Dorsolateral prefrontal cortex (tissue), 120 donors: ENCODE measurements at regions of chr9 and their contacts with region 1.

Region 1: DNA sequence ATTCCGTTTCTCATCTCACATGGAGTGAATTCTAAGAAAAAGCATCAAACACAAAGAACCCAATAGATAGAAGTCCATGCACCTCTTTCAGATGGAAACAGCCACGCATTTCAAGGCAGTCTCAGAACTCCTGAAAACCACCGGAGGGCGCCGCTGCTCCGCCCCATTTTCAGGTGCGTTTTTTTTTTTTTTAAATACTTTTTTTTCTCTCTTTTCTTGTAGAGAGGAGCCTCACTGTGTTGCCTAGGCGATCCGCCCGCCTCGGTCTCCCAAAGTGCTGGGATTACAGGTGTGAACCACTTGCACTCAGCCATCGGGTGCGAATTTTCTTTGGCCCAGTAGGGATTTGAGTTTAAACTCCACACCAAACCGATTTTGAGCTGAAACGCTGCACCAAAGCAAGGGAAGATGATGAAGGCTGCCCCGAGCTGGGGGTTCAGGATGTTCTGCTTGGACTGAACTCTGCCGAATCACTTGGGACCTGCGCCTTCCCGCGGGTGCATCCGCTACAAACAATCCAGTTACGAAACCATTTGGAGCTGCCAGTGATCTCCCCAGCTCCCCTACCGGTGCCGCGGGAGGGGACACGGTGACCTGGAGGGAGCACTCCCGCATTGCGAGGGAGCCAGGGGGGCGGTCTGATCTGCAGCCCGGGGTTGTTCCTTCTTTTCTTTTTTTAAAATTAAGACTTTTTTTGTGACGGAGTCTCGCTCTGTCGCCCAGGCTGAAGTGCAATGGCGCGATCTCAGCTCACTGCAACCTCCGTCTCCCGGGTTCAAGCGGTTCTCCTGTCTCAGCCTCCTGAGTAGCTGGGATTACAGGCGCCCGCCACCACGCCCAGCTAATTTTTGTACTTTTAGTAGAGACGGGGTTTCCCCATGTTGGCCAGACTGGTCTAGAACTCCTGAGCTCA is 1.4 kb downstream of the PTGR1 start:
- DNase-seq: peak; percentile 32 to 63 (median 60)
- H3K4me3 ChIP-seq: peak overlapping the region; percentile 58 to 90 (median 78)
- H3K27ac ChIP-seq: peak overlapping the region in 27 of 59 donors; percentile 2 to 88 (median 54)
- H3K27me3 ChIP-seq: no peaks in the 10 kb centered on the region
- CTCF ChIP-seq: peak; percentile 39 to 78 (median 66)

Region 2: GRCh38 chr9:111375817-111376564 is 222.1 kb before region 1 on chr9:
- intact Hi-C with region 1: loop called in 1 of 2 experiments (anchors 10 kb)
- DNase-seq: no peak
- H3K4me3 ChIP-seq: no peak overlapping the region
- H3K27ac ChIP-seq: peak overlapping the region in 1 of 59 donors; percentile 34
- H3K27me3 ChIP-seq: no peaks in the 10 kb centered on the region
- CTCF ChIP-seq: no peak